ENCODE measurements at regions of chr15 and their contacts with region 1.

Region 1: GRCh38 chr15:60840306-60840702 is 361.4 kb upstream of the ICE2 start:
- DNase-seq: peak in 4 of 9 experiments; percentile 4 to 55 (median 28)
- ATAC-seq: no peak
- H3K4me3 ChIP-seq: peak overlapping the region; percentile 43
- H3K4me3 Mint-ChIP-seq: peak overlapping the region; percentile 86
- H3K27ac ChIP-seq: peak overlapping the region; percentile 51 to 84
- H3K27ac Mint-ChIP-seq: peak overlapping the region; percentile 96
- H3K4me1 ChIP-seq: peaks cover 60% of the 10 kb centered on the region
- H3K4me1 Mint-ChIP-seq: peaks cover 82% of the 10 kb centered on the region
- H3K27me3 ChIP-seq: no peaks in the 10 kb centered on the region
- H3K27me3 Mint-ChIP-seq: no peaks in the 10 kb centered on the region
- CTCF ChIP-seq: no peak

Region 2: GRCh38 chr15:60649845-60650548 is 190.3 kb before region 1 on chr15:
- CTCF ChIA-PET with region 1: no interaction called
- POLR2A ChIA-PET with region 1: interaction called, 10 read pairs
- intact Hi-C with region 1: loop called (anchors 5 to 10 kb)
- DNase-seq: peak in 4 of 9 experiments; percentile 19 to 89 (median 57)
- ATAC-seq: peak; percentile 85
- H3K4me3 ChIP-seq: peak overlapping the region; percentile 5 to 23
- H3K4me3 Mint-ChIP-seq: peak overlapping the region; percentile 75
- H3K27ac ChIP-seq: peak overlapping the region; percentile 37 to 71
- H3K27ac Mint-ChIP-seq: peak overlapping the region; percentile 79
- H3K4me1 ChIP-seq: peaks cover 26% of the 10 kb centered on the region
- H3K4me1 Mint-ChIP-seq: peaks cover 36% of the 10 kb centered on the region
- H3K27me3 ChIP-seq: no peaks in the 10 kb centered on the region
- H3K27me3 Mint-ChIP-seq: no peaks in the 10 kb centered on the region
- CTCF ChIP-seq: no peak

Region 3: GRCh38 chr15:60720493-60721256 is 119.6 kb before region 1 on chr15:
- CTCF ChIA-PET with region 1: interaction called, 5 read pairs
- POLR2A ChIA-PET with region 1: interaction called, 9 read pairs
- intact Hi-C with region 1: loop called in 1 of 2 experiments (anchors 5 kb)
- DNase-seq: peak in 8 of 9 experiments; percentile 10 to 63 (median 41)
- ATAC-seq: peak; percentile 78
- H3K4me3 ChIP-seq: peak overlapping the region; percentile 29 to 46
- H3K4me3 Mint-ChIP-seq: peak overlapping the region; percentile 77
- H3K27ac ChIP-seq: peak overlapping the region in 1 of 2 experiments; percentile 52
- H3K27ac Mint-ChIP-seq: peak overlapping the region; percentile 78
- H3K4me1 ChIP-seq: peaks cover 31% of the 10 kb centered on the region
- H3K4me1 Mint-ChIP-seq: peaks cover 42% of the 10 kb centered on the region
- H3K27me3 ChIP-seq: no peaks in the 10 kb centered on the region
- H3K27me3 Mint-ChIP-seq: no peaks in the 10 kb centered on the region
- CTCF ChIP-seq: no peak

Region 4: DNA sequence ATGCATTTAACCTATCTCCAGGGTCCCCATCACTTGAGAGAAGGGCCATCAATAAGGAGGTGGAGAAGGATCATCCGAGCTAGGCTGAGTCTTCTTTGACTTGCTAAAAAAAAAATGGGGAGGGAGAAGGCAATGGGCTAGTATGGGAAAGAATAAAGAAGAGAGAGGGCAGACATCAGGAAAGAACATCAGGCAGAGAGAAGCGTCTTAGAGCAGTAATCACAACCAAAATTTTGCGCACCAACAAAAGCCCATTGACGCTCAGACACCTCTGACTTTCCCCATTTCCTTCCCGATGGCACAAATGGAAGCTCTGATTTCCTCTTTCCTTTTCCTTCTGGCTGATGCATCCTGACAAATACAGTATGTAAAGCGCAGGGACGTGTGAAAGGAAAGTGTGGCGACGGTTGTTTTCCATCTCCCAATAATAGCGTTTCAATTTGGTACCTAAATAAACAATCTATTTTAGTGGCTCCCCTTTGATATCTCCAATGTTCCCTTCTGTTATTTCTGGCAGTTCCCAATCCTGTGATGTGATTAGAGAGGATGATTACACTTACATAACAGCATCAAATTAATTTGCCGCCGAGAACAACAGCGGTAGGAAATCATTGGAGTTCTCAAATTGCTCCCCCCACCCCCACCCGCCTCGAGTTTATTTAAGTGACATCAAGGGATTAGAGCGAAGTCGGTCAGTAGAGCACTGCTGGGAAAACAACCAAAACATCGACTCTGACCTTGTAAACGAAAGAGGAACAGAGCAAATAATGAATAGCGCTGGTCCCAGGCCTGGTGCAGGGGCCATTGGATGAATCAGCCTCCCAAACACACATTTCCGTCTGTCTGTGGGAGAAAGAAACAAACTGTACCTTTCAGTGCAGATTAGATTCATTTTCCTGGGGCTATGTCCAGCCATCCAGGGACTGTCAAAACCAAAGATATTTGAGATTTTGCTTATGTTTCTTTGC is 88.0 kb before region 1 on chr15:
- CTCF ChIA-PET with region 1: no interaction called
- POLR2A ChIA-PET with region 1: no interaction called
- intact Hi-C with region 1: no loop called
- DNase-seq: no peak
- ATAC-seq: no peak
- H3K4me3 ChIP-seq: no peak overlapping the region
- H3K4me3 Mint-ChIP-seq: no peak overlapping the region
- H3K27ac ChIP-seq: no peak overlapping the region
- H3K27ac Mint-ChIP-seq: no peak overlapping the region
- H3K4me1 ChIP-seq: no peaks in the 10 kb centered on the region
- H3K4me1 Mint-ChIP-seq: no peaks in the 10 kb centered on the region
- H3K27me3 ChIP-seq: no peaks in the 10 kb centered on the region
- H3K27me3 Mint-ChIP-seq: no peaks in the 10 kb centered on the region
- CTCF ChIP-seq: no peak

Region 5: GRCh38 chr15:60804986-60805949 is 35.0 kb before region 1 on chr15:
- CTCF ChIA-PET with region 1: interaction called, 4 read pairs
- POLR2A ChIA-PET with region 1: interaction called, 10 read pairs
- intact Hi-C with region 1: loop called in 1 of 2 experiments (anchors 2 kb)
- DNase-seq: no peak
- ATAC-seq: no peak
- H3K4me3 ChIP-seq: no peak overlapping the region
- H3K4me3 Mint-ChIP-seq: no peak overlapping the region
- H3K27ac ChIP-seq: no peak overlapping the region
- H3K27ac Mint-ChIP-seq: no peak overlapping the region
- H3K4me1 ChIP-seq: peaks cover 62% of the 10 kb centered on the region
- H3K4me1 Mint-ChIP-seq: peaks cover 67% of the 10 kb centered on the region
- H3K27me3 ChIP-seq: no peaks in the 10 kb centered on the region
- H3K27me3 Mint-ChIP-seq: no peaks in the 10 kb centered on the region
- CTCF ChIP-seq: no peak